AG04449 (cell line): ENCODE measurements at regions of chr12 and their contacts with region 1.

Region 1: GRCh38 chr12:45170456-45171042 is 45.3 kb upstream of the ANO6 start:
- DNase-seq: peak; percentile 10
- H3K4me3 ChIP-seq: no peak overlapping the region
- CTCF ChIP-seq: peak; percentile 87

Region 2: DNA sequence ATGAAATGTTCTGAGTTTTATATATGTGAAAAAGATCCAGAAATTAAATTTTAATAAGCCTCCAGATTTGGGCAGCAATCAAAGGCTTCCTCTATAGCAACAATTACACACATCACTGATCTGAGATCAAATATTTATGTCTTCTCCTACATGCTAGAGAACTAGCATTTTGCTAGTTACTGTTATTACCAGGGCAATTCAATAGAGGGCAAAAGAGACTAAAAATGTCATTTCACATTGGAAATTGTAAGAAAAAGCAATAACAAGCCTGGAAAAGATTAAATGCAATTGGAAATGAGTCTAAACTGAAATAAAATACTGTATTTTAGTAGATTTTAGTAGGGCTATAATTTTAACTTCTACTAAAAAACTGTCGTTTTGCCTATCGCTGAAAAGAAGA is 12.7 kb after region 1 on chr12:
- CTCF ChIA-PET with region 1: interaction called, 18 read pairs
- POLR2A ChIA-PET with region 1: no interaction called
- DNase-seq: no peak
- H3K4me3 ChIP-seq: no peak overlapping the region
- CTCF ChIP-seq: peak; percentile 12